ENCODE measurements at regions of chrX and their contacts with region 1.

Region 1: GRCh38 chrX:30483996-30484395 is 93.6 kb downstream of the TASL start:
- DNase-seq: no peak
- ATAC-seq: no peak
- H3K4me3 ChIP-seq: no peak overlapping the region
- H3K27ac ChIP-seq: no peak overlapping the region
- H3K4me1 ChIP-seq: no peaks in the 10 kb centered on the region
- H3K27me3 ChIP-seq: peaks cover 0 to 3% (median 0%) of the 10 kb centered on the region in 9 donors
- CTCF ChIP-seq: no peak
- POLR2A ChIP-seq: no peak

Region 2: GRCh38 chrX:30215357-30215843 is 268.6 kb before region 1 on chrX and contains the start of gene MAGEB2:
- intact Hi-C with region 1: no loop called
- DNase-seq: no peak
- ATAC-seq: no peak
- H3K4me3 ChIP-seq: no peak within 1 kb of the TSS
- H3K27ac ChIP-seq: no peak within 1 kb of the TSS
- H3K4me1 ChIP-seq: no peaks in the 10 kb centered on the region
- H3K27me3 ChIP-seq: peaks cover 0 to 3% (median 0%) of the 10 kb centered on the region in 9 donors
- CTCF ChIP-seq: no peak
- POLR2A ChIP-seq: no peak
- total RNA-seq, gene MAGEB2: not detected

Region 3: DNA sequence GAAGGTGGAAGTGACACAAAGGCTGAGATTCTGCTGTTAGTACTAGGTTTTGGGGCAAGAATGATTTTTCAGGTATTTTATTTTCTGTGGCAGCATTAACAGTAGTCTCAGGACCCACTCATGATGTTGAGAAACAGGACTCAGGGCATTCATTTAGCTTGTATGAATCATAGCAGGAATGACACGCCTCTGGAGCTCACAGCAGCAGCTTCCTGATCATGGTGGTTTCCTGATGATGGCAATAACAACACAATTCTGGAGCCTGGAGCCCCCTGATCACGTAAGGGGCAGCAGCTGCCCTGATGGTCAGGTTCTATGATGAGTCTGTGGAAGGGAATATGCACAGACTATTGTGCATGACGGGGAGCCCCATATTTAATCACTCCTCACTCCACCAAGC is 46.6 kb after region 1 on chrX:
- intact Hi-C with region 1: loop called in 1 of 10 experiments (anchors 10 kb)
- DNase-seq: no peak
- ATAC-seq: no peak
- H3K4me3 ChIP-seq: no peak overlapping the region
- H3K27ac ChIP-seq: no peak overlapping the region
- H3K4me1 ChIP-seq: no peaks in the 10 kb centered on the region
- H3K27me3 ChIP-seq: peaks cover 0 to 5% (median 0%) of the 10 kb centered on the region in 9 donors
- CTCF ChIP-seq: no peak
- POLR2A ChIP-seq: no peak